Heart right ventricle (tissue), 16 donors: ENCODE measurements at regions of chrX and their contacts with region 1.

Region 1: GRCh38 chrX:94831364-94831763 is 1157.4 kb downstream of the FAM133A start:
- DNase-seq: no peak
- ATAC-seq: no peak
- H3K4me3 ChIP-seq: no peak overlapping the region
- H3K27ac ChIP-seq: no peak overlapping the region
- H3K4me1 ChIP-seq: no peaks in the 10 kb centered on the region
- H3K27me3 ChIP-seq: no peaks in the 10 kb centered on the region
- CTCF ChIP-seq: peak in 7 of 9 donors; percentile 40 to 60 (median 45)

Region 2: GRCh38 chrX:94758130-94758529 is 73.2 kb before region 1 on chrX:
- intact Hi-C with region 1: no loop called
- DNase-seq: no peak
- ATAC-seq: no peak
- H3K4me3 ChIP-seq: no peak overlapping the region
- H3K27ac ChIP-seq: no peak overlapping the region
- H3K4me1 ChIP-seq: no peaks in the 10 kb centered on the region
- H3K27me3 ChIP-seq: peaks cover 0 to 18% (median 0%) of the 10 kb centered on the region in 7 donors
- CTCF ChIP-seq: no peak

Region 3: GRCh38 chrX:95071052-95071451 is 239.7 kb after region 1 on chrX:
- intact Hi-C with region 1: loop called in 3 of 10 experiments (anchors 5 to 10 kb)
- DNase-seq: no peak
- ATAC-seq: no peak
- H3K4me3 ChIP-seq: no peak overlapping the region
- H3K27ac ChIP-seq: no peak overlapping the region
- H3K4me1 ChIP-seq: no peaks in the 10 kb centered on the region
- H3K27me3 ChIP-seq: no peaks in the 10 kb centered on the region
- CTCF ChIP-seq: peak in 5 of 9 donors; percentile 10 to 26 (median 17)

Region 4: DNA sequence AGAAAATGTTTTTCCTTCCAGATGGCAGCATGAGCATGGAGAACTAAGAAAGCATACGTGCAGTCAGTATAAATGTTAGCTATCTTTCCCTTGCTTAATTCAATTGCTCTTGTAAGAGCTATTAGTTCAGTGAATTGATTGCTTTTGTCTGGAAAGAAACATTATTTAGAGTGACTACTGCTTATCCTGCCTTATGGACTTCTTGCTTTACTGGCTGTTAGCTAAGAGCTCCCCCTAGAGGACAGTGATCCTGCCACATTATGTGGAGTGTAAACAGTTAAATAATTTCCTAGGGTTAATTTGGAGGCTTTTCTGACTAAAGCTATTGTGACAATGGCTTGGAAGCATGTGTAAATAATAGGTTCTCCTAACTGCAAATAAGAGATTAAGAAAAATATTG is 245.1 kb after region 1 on chrX:
- intact Hi-C with region 1: loop called in 3 of 10 experiments (anchors 5 to 10 kb)
- DNase-seq: no peak
- ATAC-seq: no peak
- H3K4me3 ChIP-seq: no peak overlapping the region
- H3K27ac ChIP-seq: no peak overlapping the region
- H3K4me1 ChIP-seq: no peaks in the 10 kb centered on the region
- H3K27me3 ChIP-seq: peaks cover 0 to 6% (median 0%) of the 10 kb centered on the region in 7 donors
- CTCF ChIP-seq: peak in 7 of 9 donors; percentile 22 to 53 (median 35)